B cell (primary cell): ENCODE measurements at regions of chr15 and their contacts with region 1.

Region 1: GRCh38 chr15:64093627-64094417 is at the start of gene CIAO2A:
- DNase-seq: peak; percentile 96
- ATAC-seq: peak; percentile 70
- H3K4me3 ChIP-seq: peak within 1 kb of the TSS; percentile 76 to 94 (median 84)
- H3K4me3 Mint-ChIP-seq: peak within 1 kb of the TSS; percentile 97
- H3K27ac ChIP-seq: peak within 1 kb of the TSS; percentile 90 to 95
- H3K27ac Mint-ChIP-seq: peak within 1 kb of the TSS; percentile 98
- H3K4me1 ChIP-seq: peaks cover 79% of the 10 kb centered on the region in 2 donors
- H3K4me1 Mint-ChIP-seq: peaks cover 82% of the 10 kb centered on the region
- H3K27me3 ChIP-seq: no peaks in the 10 kb centered on the region
- H3K27me3 Mint-ChIP-seq: no peaks in the 10 kb centered on the region
- CTCF ChIP-seq: no peak
- total RNA-seq, gene CIAO2A: 64.4 and 68.2 TPM in 2 replicates

Region 2: DNA sequence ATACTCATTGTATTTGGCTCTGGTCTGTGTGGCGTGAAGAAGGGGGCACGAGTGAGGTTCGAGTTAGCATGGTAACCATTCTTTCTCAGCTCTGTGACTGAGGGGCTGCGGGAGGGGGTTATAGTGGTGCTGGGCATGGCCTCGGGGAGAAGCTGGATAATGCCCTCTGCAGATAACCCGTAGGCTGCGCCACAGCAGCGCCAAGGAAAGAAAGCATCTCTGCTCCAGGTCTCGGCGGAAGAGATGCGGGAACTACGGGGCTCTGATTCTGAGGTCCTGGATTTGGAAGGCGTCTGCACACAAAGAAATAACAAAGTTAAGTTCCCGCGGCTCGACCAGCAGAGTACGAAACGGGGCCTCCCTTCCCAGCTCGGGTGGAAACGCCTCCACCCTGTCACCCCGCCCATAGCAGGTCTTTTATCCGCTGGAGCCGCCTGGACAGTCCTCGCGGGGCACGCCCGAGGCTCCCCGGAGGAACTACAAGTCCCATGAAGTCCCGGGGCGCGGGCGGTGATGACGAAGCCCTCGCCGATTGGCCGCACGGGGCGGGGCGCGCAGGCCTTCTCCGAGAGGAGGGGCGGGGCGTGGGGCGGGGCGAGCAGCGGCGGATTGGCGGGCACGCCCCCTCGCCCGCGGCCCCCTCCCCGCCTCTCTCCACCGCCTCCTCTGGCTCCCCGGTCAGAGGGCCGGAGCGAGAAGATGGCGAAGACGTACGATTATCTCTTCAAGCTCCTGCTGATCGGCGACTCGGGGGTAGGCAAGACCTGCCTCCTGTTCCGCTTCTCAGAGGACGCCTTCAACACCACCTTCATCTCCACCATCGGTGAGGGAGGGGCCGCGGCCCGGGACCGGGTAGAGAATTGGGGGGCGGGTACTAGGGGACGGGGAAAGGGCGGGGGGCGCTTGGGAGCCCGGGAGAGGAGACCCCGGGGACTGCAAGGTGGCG is 904.6 kb before region 1 on chr15 and contains the start of gene RAB8B:
- CTCF ChIA-PET with region 1: no interaction called
- POLR2A ChIA-PET with region 1: interaction called, 3 read pairs
- intact Hi-C with region 1: loop called (anchors 1 kb)
- DNase-seq: peak; percentile 94
- ATAC-seq: peak; percentile 86
- H3K4me3 ChIP-seq: peak within 1 kb of the TSS; percentile 78 to 99 (median 94)
- H3K4me3 Mint-ChIP-seq: peak within 1 kb of the TSS; percentile 98
- H3K27ac ChIP-seq: peak within 1 kb of the TSS; percentile 92 to 93
- H3K27ac Mint-ChIP-seq: peak within 1 kb of the TSS; percentile 94
- H3K4me1 ChIP-seq: peaks cover 39 to 44% of the 10 kb centered on the region in 2 donors
- H3K4me1 Mint-ChIP-seq: peaks cover 53% of the 10 kb centered on the region
- H3K27me3 ChIP-seq: no peaks in the 10 kb centered on the region
- H3K27me3 Mint-ChIP-seq: no peaks in the 10 kb centered on the region
- CTCF ChIP-seq: no peak
- total RNA-seq, gene RAB8B: 58.1 and 61.3 TPM in 2 replicates

Region 3: GRCh38 chr15:63504247-63504978 is 589.4 kb before region 1 on chr15 and contains the start of gene USP3:
- CTCF ChIA-PET with region 1: no interaction called
- POLR2A ChIA-PET with region 1: no interaction called
- intact Hi-C with region 1: loop called (anchors 5 kb)
- DNase-seq: peak; percentile 97
- ATAC-seq: peak; percentile 70
- H3K4me3 ChIP-seq: peak within 1 kb of the TSS; percentile 78 to 95 (median 82)
- H3K4me3 Mint-ChIP-seq: peak within 1 kb of the TSS; percentile 96
- H3K27ac ChIP-seq: peak within 1 kb of the TSS; percentile 99
- H3K27ac Mint-ChIP-seq: peak within 1 kb of the TSS; percentile 100
- H3K4me1 ChIP-seq: peaks cover 67 to 77% of the 10 kb centered on the region in 2 donors
- H3K4me1 Mint-ChIP-seq: peaks cover 80% of the 10 kb centered on the region
- H3K27me3 ChIP-seq: no peaks in the 10 kb centered on the region
- H3K27me3 Mint-ChIP-seq: no peaks in the 10 kb centered on the region
- CTCF ChIP-seq: peak; percentile 41
- total RNA-seq, gene USP3: 152 and 178 TPM in 2 replicates

Region 4: DNA sequence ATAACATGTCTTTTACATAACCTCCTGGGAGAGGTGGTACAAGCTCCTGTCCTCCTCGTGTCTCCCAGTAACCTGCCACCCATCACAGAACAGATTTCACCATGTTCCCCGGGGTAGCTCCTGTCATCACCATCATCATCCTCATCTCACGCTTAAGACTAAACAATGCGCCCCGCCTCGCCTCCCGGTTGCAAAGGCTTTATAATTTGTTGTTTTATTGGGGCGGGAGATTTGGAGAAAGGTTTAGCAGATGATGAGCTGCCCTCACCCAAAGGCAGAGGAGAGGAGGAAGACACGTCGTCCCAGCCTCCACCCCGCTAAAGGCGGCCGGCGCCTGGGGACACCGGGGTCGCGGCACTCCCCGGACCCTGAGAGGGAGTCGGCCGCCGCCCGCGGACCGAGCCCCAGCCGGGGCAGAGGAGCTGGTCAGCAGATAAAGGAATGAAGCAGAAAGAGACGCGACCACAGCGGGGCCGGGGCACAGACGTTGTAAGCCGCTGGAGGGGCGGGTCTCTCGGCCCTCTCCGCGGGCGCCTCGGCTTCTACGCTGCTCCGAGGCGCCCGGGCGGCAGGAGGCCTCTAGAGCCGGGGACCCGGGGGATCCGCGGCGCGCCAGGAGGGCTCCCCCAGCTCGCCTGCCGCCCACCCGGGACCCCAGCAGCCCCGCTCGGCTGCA is 260.7 kb before region 1 on chr15:
- CTCF ChIA-PET with region 1: no interaction called
- POLR2A ChIA-PET with region 1: no interaction called
- intact Hi-C with region 1: loop called (anchors 1 kb)
- DNase-seq: no peak
- ATAC-seq: peak; percentile 39
- H3K4me3 ChIP-seq: peak overlapping the region; percentile 83 to 95 (median 93)
- H3K4me3 Mint-ChIP-seq: peak overlapping the region; percentile 91
- H3K27ac ChIP-seq: peak overlapping the region; percentile 90
- H3K27ac Mint-ChIP-seq: peak overlapping the region; percentile 87
- H3K4me1 ChIP-seq: peaks cover 22 to 27% of the 10 kb centered on the region in 2 donors
- H3K4me1 Mint-ChIP-seq: peaks cover 39% of the 10 kb centered on the region
- H3K27me3 ChIP-seq: no peaks in the 10 kb centered on the region
- H3K27me3 Mint-ChIP-seq: no peaks in the 10 kb centered on the region
- CTCF ChIP-seq: no peak

Region 5: GRCh38 chr15:64082757-64083156 is 11.1 kb before region 1 on chr15:
- CTCF ChIA-PET with region 1: no interaction called
- POLR2A ChIA-PET with region 1: no interaction called
- intact Hi-C with region 1: no loop called
- DNase-seq: no peak
- ATAC-seq: no peak
- H3K4me3 ChIP-seq: no peak overlapping the region
- H3K4me3 Mint-ChIP-seq: no peak overlapping the region
- H3K27ac ChIP-seq: no peak overlapping the region
- H3K27ac Mint-ChIP-seq: no peak overlapping the region
- H3K4me1 ChIP-seq: peaks cover 0 to under 1% of the 10 kb centered on the region in 2 donors
- H3K4me1 Mint-ChIP-seq: peaks cover 6% of the 10 kb centered on the region
- H3K27me3 ChIP-seq: no peaks in the 10 kb centered on the region
- H3K27me3 Mint-ChIP-seq: no peaks in the 10 kb centered on the region
- CTCF ChIP-seq: no peak

Region 6: DNA sequence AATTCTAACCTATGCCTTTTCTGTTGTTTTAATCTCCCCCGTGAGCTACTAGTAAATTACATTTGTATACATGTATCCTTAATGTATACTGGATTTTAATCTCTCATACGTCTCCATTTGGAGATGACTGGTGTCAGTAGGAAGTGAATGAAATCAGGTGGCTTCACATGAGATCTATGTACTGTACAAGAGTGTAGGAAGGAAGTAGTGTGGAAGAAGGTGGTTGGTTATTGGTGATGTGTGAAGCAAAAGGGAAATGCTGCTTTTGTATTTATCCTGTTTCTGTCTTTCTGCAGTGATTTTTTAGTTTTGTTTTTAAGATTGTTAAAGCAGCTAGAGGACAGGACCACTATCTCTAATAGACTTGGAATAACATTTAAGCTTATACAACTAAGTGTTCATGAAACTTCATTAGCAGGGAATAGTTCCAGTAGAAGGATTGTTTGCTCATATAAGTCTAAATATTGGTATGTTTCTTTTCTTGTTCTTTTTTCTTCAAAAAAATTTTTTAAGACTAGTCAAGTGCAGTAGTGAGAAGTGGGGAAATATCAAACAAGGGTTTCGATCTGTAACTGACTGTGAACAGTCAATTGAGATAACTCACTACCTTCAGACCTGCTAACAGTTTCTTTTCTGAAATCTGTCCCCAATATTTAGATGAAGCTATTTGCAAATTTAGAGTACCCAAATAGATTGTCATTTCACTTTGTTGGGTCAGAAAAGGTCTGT is 17.3 kb after region 1 on chr15:
- CTCF ChIA-PET with region 1: interaction called, 5 read pairs
- POLR2A ChIA-PET with region 1: interaction called, 5 read pairs
- intact Hi-C with region 1: loop called (anchors 2 kb)
- DNase-seq: peak; percentile 73
- ATAC-seq: peak; percentile 86
- H3K4me3 ChIP-seq: peak overlapping the region; percentile 3 to 38 (median 16)
- H3K4me3 Mint-ChIP-seq: peak overlapping the region; percentile 74
- H3K27ac ChIP-seq: peak overlapping the region; percentile 83 to 92
- H3K27ac Mint-ChIP-seq: peak overlapping the region; percentile 89
- H3K4me1 ChIP-seq: peaks cover 47 to 50% of the 10 kb centered on the region in 2 donors
- H3K4me1 Mint-ChIP-seq: peaks cover 59% of the 10 kb centered on the region
- H3K27me3 ChIP-seq: no peaks in the 10 kb centered on the region
- H3K27me3 Mint-ChIP-seq: no peaks in the 10 kb centered on the region
- CTCF ChIP-seq: no peak

Region 7: DNA sequence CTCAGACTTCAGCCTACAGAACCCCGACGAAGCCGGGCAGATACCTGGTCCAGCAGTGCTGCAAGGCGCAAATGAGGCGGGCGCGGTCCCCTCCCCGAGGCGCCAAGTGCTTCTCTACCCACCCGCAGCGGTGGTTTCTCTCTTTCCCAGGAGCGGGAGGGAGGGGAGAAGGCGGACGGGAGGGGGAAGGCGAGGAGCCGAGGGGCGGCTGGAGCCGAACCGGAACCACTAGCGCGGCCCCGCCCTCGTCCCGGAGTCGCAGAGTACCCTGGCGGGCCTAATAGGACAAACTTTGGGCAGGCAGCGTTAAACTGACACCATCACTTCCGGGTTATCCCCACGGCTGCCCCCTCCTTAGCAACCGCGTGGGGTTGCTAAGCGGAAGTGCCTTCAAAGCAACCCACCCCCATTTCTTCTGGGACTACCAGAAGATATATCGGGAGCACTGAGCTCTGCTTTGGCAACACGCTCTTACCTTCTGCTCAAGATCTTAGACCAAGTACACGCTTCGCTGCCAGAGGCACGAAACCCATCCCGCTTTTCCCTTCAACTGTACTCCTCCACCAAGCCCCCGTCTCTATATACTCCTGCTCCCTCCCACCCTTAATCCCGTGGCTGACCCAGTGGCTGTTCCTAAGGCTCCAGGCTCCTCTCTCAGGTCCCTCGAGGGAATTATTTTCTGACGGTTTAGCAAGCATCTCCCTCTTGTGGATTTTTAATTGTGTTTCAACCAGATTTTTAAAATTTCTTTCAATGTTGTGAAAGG is 262.3 kb after region 1 on chr15 and contains the start of gene CSNK1G1:
- CTCF ChIA-PET with region 1: no interaction called
- POLR2A ChIA-PET with region 1: no interaction called
- intact Hi-C with region 1: loop called (anchors 2 kb)
- DNase-seq: peak; percentile 95
- ATAC-seq: peak; percentile 98
- H3K4me3 ChIP-seq: peak within 1 kb of the TSS; percentile 75 to 92 (median 86)
- H3K4me3 Mint-ChIP-seq: peak within 1 kb of the TSS; percentile 94
- H3K27ac ChIP-seq: peak within 1 kb of the TSS; percentile 50 to 78
- H3K27ac Mint-ChIP-seq: peak within 1 kb of the TSS; percentile 88
- H3K4me1 ChIP-seq: peaks cover 9 to 16% of the 10 kb centered on the region in 2 donors
- H3K4me1 Mint-ChIP-seq: peaks cover 15% of the 10 kb centered on the region
- H3K27me3 ChIP-seq: no peaks in the 10 kb centered on the region
- H3K27me3 Mint-ChIP-seq: no peaks in the 10 kb centered on the region
- CTCF ChIP-seq: peak; percentile 55
- total RNA-seq, gene CSNK1G1: 39.0 and 40.3 TPM in 2 replicates